Dorsolateral prefrontal cortex (tissue), 120 donors: ENCODE measurements at regions of chr5 and their contacts with region 1.

Region 1: GRCh38 chr5:10701567-10702039 is 59.4 kb downstream of the DAP start:
- DNase-seq: peak in 2 of 10 donors; percentile 13 to 32
- H3K4me3 ChIP-seq: no peak overlapping the region
- H3K27ac ChIP-seq: peak overlapping the region in 5 of 59 donors; percentile 4 to 34 (median 30)
- H3K27me3 ChIP-seq: no peaks in the 10 kb centered on the region
- CTCF ChIP-seq: peak; percentile 58 to 90 (median 82)

Region 2: DNA sequence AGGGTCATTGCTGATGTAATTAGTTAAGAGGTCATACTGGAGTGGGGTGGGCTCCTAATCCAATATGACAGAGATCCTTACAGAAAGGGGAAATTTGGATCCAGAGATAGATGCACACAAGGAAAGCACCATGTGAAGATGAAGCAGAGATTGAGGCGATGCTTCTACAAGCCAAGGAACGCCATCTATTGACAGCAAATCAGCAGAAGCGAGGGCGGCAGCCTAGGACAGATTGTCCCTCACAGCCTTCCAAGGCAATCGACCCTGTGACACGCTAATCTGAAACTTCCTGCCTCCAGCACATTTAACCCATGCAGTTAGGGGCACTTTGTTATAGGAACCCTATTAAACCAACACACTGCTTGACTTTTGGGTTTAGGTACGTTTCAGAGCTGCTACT is 344.6 kb after region 1 on chr5:
- intact Hi-C with region 1: loop called in 1 of 2 experiments (anchors 10 kb)
- DNase-seq: peak in 3 of 10 donors; percentile 33 to 48 (median 48)
- H3K4me3 ChIP-seq: no peak overlapping the region
- H3K27ac ChIP-seq: peak overlapping the region in 2 of 59 donors; percentile 11 to 24
- H3K27me3 ChIP-seq: no peaks in the 10 kb centered on the region
- CTCF ChIP-seq: peak in 49 of 56 donors; percentile 10 to 67 (median 40)

Region 3: GRCh38 chr5:11814373-11814772 is 1112.8 kb after region 1 on chr5:
- intact Hi-C with region 1: no loop called
- DNase-seq: peak in 1 of 10 donors; percentile 12
- H3K4me3 ChIP-seq: peak overlapping the region in 5 of 59 donors; percentile 4 to 27 (median 13)
- H3K27ac ChIP-seq: no peak overlapping the region
- H3K27me3 ChIP-seq: no peaks in the 10 kb centered on the region
- CTCF ChIP-seq: no peak

Region 4: DNA sequence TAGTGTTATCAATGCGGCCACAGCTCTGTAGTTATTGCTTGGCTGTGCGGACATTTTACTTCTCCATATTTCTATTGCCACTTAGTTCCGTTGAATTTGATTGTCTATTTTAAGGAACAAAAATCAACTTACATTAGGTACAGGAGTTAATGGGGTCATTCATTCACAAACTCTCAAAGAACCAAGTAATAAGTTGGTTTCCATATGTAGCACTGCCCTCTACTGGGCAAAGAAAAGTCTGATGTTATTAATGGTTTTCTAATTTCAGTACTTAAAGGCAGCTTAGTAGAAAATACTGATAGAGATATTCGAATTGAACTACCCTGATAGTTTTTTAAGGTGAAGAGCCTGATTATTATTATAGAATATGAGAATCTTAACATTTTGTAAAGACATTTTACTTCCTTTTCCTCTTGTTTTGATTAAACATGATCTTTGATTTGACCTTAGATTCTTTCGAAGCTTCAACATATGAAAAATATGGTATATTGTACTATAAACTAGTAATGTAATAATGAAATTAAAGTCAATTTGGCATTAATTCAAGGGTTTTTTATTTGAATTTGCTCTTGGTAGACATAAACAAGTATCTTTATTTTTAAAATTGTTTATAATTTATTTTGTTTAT is 1322.1 kb after region 1 on chr5:
- intact Hi-C with region 1: loop called (anchors 5 to 10 kb)
- DNase-seq: no peak
- H3K4me3 ChIP-seq: no peak overlapping the region
- H3K27ac ChIP-seq: no peak overlapping the region
- H3K27me3 ChIP-seq: no peaks in the 10 kb centered on the region
- CTCF ChIP-seq: peak; percentile 48 to 84 (median 71)